Activated CD4-positive, alpha-beta memory T cell treated with anti-CD3 and anti-CD28 coated beads for 36 hours (primary cell): ENCODE measurements at regions of chr11 and their contacts with region 1.

Region 1: DNA sequence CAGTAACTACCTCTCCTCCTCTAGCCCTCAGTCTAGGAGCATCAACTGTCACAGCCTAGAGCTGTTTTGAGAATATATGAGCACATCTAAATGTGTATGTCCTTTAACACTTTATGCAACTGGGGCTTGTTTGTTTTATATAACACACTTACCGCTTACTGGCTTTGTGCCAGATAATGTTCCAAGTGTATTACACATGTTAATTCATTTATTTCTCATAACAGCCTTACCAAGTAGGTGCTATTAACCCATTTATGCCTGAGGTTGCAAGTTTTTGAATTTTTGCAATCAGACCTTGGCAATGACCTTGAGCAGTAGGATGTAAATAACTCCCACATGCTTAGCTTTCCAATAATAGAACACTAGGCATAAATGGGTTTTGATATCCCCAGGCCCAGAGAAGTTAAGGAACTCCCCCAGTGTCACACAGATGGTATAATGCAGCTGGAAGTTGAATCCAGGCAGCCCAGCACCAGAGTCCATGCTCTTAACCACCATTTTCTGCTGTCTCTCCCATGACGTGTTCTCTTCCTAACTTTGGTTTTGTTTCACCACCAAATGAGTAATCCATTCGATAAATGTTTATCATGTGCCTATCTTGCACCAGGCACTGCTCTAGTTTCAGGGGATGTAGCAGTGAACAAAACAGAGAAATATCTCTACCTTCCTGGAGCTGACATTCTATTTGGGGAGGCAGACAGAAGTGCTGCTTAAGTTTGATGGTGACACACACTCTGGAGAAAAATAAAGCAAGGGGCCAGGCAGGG is 23.1 kb downstream of the PRDM11 start:
- DNase-seq: no peak
- H3K4me3 Mint-ChIP-seq: no peak overlapping the region
- H3K27ac Mint-ChIP-seq: no peak overlapping the region
- H3K4me1 Mint-ChIP-seq: peaks cover 13% of the 10 kb centered on the region
- H3K27me3 Mint-ChIP-seq: no peaks in the 10 kb centered on the region

Region 2: DNA sequence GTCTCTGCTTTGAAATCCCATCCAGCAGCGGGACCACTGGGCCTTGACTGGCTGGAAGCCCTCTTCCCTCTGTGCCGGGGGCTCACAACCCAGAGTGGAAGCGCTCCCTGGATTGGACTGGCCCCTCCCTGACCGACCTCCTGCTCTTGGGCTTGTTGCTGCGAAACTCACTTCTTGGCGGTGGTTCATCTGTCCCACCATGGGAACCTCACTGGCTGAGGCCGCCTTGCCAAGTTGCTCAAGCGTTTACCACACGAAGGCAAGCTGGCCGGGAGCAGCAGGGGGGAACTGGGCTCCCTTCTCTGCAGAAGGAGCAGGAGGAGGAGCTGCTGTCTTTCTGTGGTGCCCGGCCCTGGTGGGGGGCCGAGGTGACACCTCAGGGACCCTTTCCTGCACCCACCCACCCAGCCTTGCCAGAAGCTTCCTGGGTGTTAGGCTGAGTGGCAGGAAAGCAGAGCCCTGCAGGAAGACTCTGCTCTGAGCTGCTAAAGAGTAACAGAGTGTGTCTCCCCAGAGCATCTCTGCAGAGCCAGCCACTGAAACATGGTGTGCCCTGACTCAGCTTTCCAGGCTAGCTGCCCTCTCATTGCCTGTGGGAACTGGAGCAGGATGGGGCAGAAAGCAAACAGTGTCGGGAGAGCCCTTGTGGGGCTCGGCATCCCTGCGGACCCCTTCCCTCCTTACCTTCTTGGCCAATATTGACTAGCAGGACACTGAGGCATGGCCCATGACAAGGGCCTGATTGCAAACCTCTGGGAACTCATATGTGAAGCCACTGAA is 771.0 kb before region 1 on chr11:
- CTCF ChIA-PET with region 1: no interaction called
- POLR2A ChIA-PET with region 1: no interaction called
- intact Hi-C with region 1: no loop called
- DNase-seq: no peak
- H3K4me3 Mint-ChIP-seq: no peak overlapping the region
- H3K27ac Mint-ChIP-seq: no peak overlapping the region
- H3K4me1 Mint-ChIP-seq: peaks cover 2% of the 10 kb centered on the region
- H3K27me3 Mint-ChIP-seq: peaks cover 21% of the 10 kb centered on the region

Region 3: GRCh38 chr11:45147017-45147728 is 22.3 kb before region 1 on chr11:
- CTCF ChIA-PET with region 1: no interaction called
- POLR2A ChIA-PET with region 1: no interaction called
- intact Hi-C with region 1: loop called (anchors 2 kb)
- DNase-seq: peak; percentile 95
- H3K4me3 Mint-ChIP-seq: peak overlapping the region; percentile 82
- H3K27ac Mint-ChIP-seq: peak overlapping the region; percentile 69
- H3K4me1 Mint-ChIP-seq: peaks cover 19% of the 10 kb centered on the region
- H3K27me3 Mint-ChIP-seq: peaks cover 8% of the 10 kb centered on the region